Activated naive CD4-positive, alpha-beta T cell treated with anti-CD3 and anti-CD28 coated beads, Interleukin-2, amount 10 ng/mL, durations not matched to agents 7 days and 5 days (primary cell): ENCODE measurements at regions of chr5 and their contacts with region 1.

Region 1: DNA sequence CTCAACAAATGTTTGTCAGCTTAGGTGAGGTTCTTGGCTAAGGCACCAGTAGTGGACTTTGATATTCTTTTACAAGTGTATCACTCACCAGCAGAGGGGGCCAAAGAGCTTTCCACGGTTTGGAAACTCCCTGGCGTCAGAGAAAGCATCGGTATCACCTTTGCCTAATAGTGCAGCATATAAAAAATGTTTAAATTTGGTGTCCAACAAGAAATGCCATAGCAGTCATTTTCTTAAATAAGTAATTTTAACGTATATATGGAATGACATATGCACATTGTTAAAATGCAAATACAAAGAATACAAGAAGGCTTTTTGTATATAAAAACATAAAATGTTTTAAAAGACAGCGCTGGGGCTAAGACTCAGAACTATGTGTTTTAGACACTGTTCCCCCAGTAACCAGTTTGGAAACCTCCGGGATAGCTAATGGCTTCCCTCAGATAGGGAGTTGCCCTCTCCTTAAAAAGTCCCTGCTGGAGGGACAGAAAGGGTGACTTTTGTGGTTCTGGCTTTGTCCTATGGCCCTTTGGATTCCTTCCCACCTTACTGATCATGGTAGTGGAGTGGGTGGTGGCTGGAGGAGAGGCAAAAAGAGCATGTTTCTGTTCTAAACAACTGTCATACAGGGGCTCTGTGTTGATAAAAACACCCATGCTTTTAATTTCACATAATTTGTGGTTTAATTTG is 124.6 kb downstream of the GPBP1 start:
- DNase-seq: peak; percentile 89
- H3K4me3 Mint-ChIP-seq: peak overlapping the region; percentile 47
- H3K27ac Mint-ChIP-seq: no peak overlapping the region
- H3K4me1 Mint-ChIP-seq: peaks cover 24% of the 10 kb centered on the region
- H3K27me3 Mint-ChIP-seq: peaks cover 13% of the 10 kb centered on the region

Region 2: DNA sequence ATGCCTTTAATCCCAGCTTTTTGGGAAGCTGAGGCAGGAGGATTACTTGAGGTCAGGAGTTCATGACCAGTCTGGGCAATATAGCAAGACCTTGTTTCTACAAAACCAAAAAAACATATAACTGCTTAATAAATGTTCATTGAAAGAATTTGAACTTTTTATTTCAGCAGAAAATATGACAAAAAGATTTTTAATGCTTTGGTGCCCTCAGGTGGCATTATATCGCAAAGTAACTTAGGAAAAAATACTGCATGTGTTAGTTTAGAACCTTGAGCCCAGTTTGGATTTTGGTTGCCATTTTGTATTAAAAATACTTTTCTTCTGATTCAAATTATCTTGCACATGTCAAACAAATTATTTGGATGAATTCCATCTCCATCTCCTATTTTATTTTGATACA is 21.4 kb before region 1 on chr5:
- CTCF ChIA-PET with region 1: no interaction called
- DNase-seq: no peak
- H3K4me3 Mint-ChIP-seq: no peak overlapping the region
- H3K27ac Mint-ChIP-seq: no peak overlapping the region
- H3K4me1 Mint-ChIP-seq: no peaks in the 10 kb centered on the region
- H3K27me3 Mint-ChIP-seq: peaks cover 10% of the 10 kb centered on the region

Region 3: DNA sequence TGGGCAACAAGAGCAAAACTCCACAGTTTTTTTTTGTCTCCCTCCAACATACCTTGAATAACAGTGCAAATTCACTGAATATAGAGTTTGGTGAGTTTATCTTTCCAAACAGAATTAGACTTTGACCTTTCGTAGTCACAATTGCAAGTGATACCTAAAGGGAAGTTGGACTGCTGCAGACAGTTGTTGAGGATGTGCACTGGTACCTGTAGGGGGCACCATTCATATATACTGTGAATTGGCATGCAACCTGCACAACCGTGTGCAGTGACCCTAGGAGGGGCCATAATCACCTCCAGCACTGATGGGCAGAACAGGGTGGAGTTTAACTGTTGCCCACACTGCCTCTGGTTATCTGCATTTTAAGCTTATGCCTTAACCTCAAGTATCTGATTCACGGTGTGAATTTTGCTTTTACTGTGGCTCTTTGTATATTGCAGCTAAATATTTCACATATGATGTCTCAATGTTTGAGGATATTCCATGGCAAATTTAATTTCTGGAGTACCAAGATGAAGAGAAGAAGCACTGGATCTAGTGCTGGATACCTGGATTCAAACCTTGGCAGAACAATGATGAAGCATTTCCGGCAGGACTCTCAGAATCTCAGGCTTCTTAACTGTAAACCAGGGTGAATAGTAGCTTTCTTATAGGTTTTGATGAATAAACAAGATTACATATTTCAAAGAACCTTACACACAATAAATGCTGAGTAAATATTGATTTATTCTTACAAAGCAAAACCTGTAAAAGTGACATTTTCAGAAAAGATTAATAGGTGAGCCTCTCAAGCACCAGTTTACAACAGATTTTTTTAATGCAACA is 39.8 kb after region 1 on chr5:
- CTCF ChIA-PET with region 1: interaction called, 11 read pairs
- DNase-seq: peak; percentile 29
- H3K4me3 Mint-ChIP-seq: no peak overlapping the region
- H3K27ac Mint-ChIP-seq: no peak overlapping the region
- H3K4me1 Mint-ChIP-seq: no peaks in the 10 kb centered on the region
- H3K27me3 Mint-ChIP-seq: no peaks in the 10 kb centered on the region

Region 4: GRCh38 chr5:57349214-57349613 is 50.8 kb after region 1 on chr5:
- CTCF ChIA-PET with region 1: no interaction called
- DNase-seq: no peak
- H3K4me3 Mint-ChIP-seq: no peak overlapping the region
- H3K27ac Mint-ChIP-seq: no peak overlapping the region
- H3K4me1 Mint-ChIP-seq: no peaks in the 10 kb centered on the region
- H3K27me3 Mint-ChIP-seq: peaks cover 4% of the 10 kb centered on the region

Region 5: GRCh38 chr5:57494104-57495098 is 196.0 kb after region 1 on chr5:
- CTCF ChIA-PET with region 1: interaction called, 12 read pairs
- DNase-seq: peak; percentile 29
- H3K4me3 Mint-ChIP-seq: no peak overlapping the region
- H3K27ac Mint-ChIP-seq: peak overlapping the region; percentile 87
- H3K4me1 Mint-ChIP-seq: peaks cover 47% of the 10 kb centered on the region
- H3K27me3 Mint-ChIP-seq: no peaks in the 10 kb centered on the region